Ascending aorta (tissue), 2 donors: ENCODE measurements at regions of chr13 and their contacts with region 1.

Region 1: GRCh38 chr13:101211261-101211660 is 205.0 kb downstream of the NALCN start:
- DNase-seq: no peak
- H3K4me3 ChIP-seq: no peak overlapping the region
- H3K27ac ChIP-seq: no peak overlapping the region
- H3K4me1 ChIP-seq: peaks cover 0 to 16% of the 10 kb centered on the region in 2 donors
- H3K27me3 ChIP-seq: no peaks in the 10 kb centered on the region
- CTCF ChIP-seq: no peak

Region 2: DNA sequence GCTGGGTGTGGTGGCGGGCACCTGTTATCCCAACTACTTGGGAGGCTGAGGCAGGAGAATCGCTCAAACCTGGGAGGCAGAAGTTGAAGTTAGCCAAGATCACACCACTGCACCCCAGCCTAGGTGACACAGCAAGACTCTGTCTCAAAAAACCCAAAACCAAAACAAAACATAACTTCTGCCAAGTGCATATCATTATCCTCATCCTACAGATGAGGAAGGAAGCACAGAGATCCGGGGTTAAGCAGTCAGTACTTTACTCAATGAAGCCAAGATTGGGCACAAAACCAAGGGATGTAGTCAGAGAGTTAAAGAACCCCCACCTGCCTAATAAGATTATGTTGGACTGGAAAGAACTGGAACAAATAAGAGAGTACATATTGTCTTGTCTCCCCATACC is 531.1 kb before region 1 on chr13:
- intact Hi-C with region 1: no loop called
- DNase-seq: no peak
- H3K4me3 ChIP-seq: no peak overlapping the region
- H3K27ac ChIP-seq: no peak overlapping the region
- H3K4me1 ChIP-seq: peaks cover 0 to 4% of the 10 kb centered on the region in 2 donors
- H3K27me3 ChIP-seq: no peaks in the 10 kb centered on the region
- CTCF ChIP-seq: no peak

Region 3: GRCh38 chr13:101181076-101181685 is 30.1 kb before region 1 on chr13:
- intact Hi-C with region 1: no loop called
- DNase-seq: no peak
- H3K4me3 ChIP-seq: no peak overlapping the region
- H3K27ac ChIP-seq: no peak overlapping the region
- H3K4me1 ChIP-seq: no peaks in the 10 kb centered on the region
- H3K27me3 ChIP-seq: no peaks in the 10 kb centered on the region
- CTCF ChIP-seq: no peak

Region 4: DNA sequence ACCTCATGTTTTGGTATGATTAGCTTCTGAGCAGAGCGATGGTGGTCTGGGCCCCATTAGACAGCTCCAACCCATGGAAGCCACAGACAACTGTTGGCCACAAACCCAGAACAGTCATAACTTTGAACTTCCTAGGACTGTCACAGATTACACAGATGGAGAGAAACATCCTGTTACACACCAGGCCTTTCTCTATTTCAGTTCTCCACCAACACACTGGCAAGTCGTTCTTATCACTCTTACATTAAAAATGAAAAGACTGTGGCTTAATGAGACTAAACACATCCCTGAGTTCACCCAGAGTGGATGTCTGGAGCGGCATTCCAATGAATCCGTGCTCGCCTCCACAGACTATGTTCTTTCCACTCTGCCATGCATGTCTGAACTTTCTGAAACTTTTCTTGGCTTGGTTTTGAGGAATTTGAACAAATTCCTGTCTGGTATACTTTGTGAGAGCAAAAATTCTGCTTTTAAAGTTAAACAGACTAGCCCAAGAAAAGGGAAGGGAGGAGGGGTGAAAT is 96.0 kb after region 1 on chr13:
- intact Hi-C with region 1: loop called (anchors 10 kb)
- DNase-seq: peak in 1 of 2 donors; percentile 74
- H3K4me3 ChIP-seq: no peak overlapping the region
- H3K27ac ChIP-seq: peak overlapping the region; percentile 73 to 80
- H3K4me1 ChIP-seq: peaks cover 0 to 32% of the 10 kb centered on the region in 2 donors
- H3K27me3 ChIP-seq: no peaks in the 10 kb centered on the region
- CTCF ChIP-seq: no peak